Ovary (tissue), 10 donors: ENCODE measurements at regions of chr13 and their contacts with region 1.

Region 1: GRCh38 chr13:107211073-107211472 is 643.1 kb upstream of the ARGLU1 start:
- DNase-seq: peak; percentile 37 to 73 (median 69)
- H3K4me3 ChIP-seq: no peak overlapping the region
- H3K27ac ChIP-seq: no peak overlapping the region
- H3K4me1 ChIP-seq: peaks cover 3% of the 10 kb centered on the region
- H3K27me3 ChIP-seq: no peaks in the 10 kb centered on the region
- CTCF ChIP-seq: peak; percentile 45 to 65 (median 52)
- EP300 ChIP-seq: no peak
- POLR2A ChIP-seq: no peak

Region 2: GRCh38 chr13:107252428-107252827 is 41.4 kb after region 1 on chr13:
- intact Hi-C with region 1: loop called in 1 of 4 experiments (anchors 1 kb)
- DNase-seq: no peak
- H3K4me3 ChIP-seq: no peak overlapping the region
- H3K27ac ChIP-seq: no peak overlapping the region
- H3K4me1 ChIP-seq: no peaks in the 10 kb centered on the region
- H3K27me3 ChIP-seq: no peaks in the 10 kb centered on the region
- CTCF ChIP-seq: no peak
- EP300 ChIP-seq: no peak
- POLR2A ChIP-seq: no peak

Region 3: DNA sequence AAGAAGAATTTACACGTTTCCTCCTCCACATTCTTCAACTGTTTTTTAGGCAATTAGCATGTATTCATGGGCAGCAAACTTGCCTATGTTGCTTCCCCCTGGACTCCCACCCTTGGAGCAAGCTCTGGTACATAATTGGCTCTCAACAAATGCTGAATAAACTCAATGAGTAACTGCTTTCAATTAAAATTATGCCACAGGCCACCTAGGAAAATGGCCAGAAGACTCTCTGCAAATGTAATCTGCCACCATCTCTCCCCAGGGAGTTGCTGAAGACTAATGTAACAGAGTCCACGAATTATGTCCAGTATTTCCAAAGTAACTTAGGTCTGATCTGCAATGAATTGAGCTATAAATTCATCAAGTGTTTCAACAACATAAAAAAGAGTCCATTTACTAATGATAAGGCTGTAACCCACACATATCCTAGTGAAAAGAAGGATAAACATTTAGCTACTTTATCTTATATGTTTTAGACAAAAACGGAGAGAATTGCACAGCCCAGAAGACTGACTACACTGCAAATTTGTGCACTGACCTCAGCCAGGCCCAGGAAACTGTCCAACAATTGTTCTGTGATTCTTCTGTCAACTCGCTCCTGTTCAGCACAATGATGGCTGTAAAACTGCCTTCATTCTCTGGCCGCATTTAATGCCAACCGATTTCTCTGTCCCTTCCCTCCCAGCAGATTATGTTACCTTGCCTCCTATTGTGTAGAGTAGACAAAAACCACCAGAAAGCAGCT is 165.4 kb after region 1 on chr13:
- intact Hi-C with region 1: no loop called
- DNase-seq: no peak
- H3K4me3 ChIP-seq: no peak overlapping the region
- H3K27ac ChIP-seq: no peak overlapping the region
- H3K4me1 ChIP-seq: no peaks in the 10 kb centered on the region
- H3K27me3 ChIP-seq: no peaks in the 10 kb centered on the region
- CTCF ChIP-seq: no peak
- EP300 ChIP-seq: no peak
- POLR2A ChIP-seq: no peak

Region 4: DNA sequence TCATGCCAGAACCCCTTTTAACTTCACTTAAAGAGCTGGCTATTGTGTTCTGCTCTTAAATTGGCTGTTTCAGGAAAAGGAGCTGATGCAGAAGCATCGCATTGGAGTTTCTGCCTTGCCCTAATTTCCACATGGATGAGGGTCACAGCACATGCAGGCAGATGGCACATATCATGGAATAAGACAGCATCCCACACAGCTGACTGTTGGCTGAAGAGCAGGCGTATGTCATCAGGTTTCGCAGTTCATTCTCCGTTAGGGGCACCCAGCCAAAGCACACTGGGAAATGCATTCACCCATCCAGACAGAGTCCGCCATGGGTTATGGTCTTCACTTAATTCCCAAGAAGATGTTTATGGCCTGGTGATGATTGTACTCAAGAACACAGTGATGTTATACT is 431.8 kb after region 1 on chr13:
- intact Hi-C with region 1: loop called in 1 of 4 experiments (anchors 10 kb)
- DNase-seq: no peak
- H3K4me3 ChIP-seq: no peak overlapping the region
- H3K27ac ChIP-seq: no peak overlapping the region
- H3K4me1 ChIP-seq: peaks cover 3% of the 10 kb centered on the region
- H3K27me3 ChIP-seq: no peaks in the 10 kb centered on the region
- CTCF ChIP-seq: no peak
- EP300 ChIP-seq: no peak
- POLR2A ChIP-seq: no peak